ENCODE measurements at regions of chr6 and their contacts with region 1.

Region 1: GRCh38 chr6:158143700-158144099 is 24.4 kb downstream of the SERAC1 start:
- DNase-seq: peak; percentile 13
- H3K4me3 Mint-ChIP-seq: no peak overlapping the region
- H3K27ac Mint-ChIP-seq: no peak overlapping the region
- H3K4me1 Mint-ChIP-seq: peaks cover 7% of the 10 kb centered on the region
- H3K27me3 Mint-ChIP-seq: no peaks in the 10 kb centered on the region
- CTCF ChIP-seq: peak; percentile 33

Region 2: GRCh38 chr6:157764178-157765033 is 379.3 kb before region 1 on chr6:
- CTCF ChIA-PET with region 1: no interaction called
- intact Hi-C with region 1: no loop called
- DNase-seq: peak; percentile 85
- H3K4me3 Mint-ChIP-seq: peak overlapping the region; percentile 43
- H3K27ac Mint-ChIP-seq: peak overlapping the region; percentile 97
- H3K4me1 Mint-ChIP-seq: peaks cover 49% of the 10 kb centered on the region
- H3K27me3 Mint-ChIP-seq: no peaks in the 10 kb centered on the region
- CTCF ChIP-seq: no peak

Region 3: GRCh38 chr6:158207422-158207788 is 63.7 kb after region 1 on chr6:
- CTCF ChIA-PET with region 1: interaction called, 6 read pairs
- intact Hi-C with region 1: loop called (anchors 5 kb)
- DNase-seq: no peak
- H3K4me3 Mint-ChIP-seq: no peak overlapping the region
- H3K27ac Mint-ChIP-seq: no peak overlapping the region
- H3K4me1 Mint-ChIP-seq: peaks cover 26% of the 10 kb centered on the region
- H3K27me3 Mint-ChIP-seq: no peaks in the 10 kb centered on the region
- CTCF ChIP-seq: no peak